ENCODE measurements at regions of chr21 and their contacts with region 1.

Region 1: GRCh38 chr21:35400233-35400957 is 351.3 kb upstream of the RUNX1 start:
- DNase-seq: no peak
- ATAC-seq: peak; percentile 73

Region 2: DNA sequence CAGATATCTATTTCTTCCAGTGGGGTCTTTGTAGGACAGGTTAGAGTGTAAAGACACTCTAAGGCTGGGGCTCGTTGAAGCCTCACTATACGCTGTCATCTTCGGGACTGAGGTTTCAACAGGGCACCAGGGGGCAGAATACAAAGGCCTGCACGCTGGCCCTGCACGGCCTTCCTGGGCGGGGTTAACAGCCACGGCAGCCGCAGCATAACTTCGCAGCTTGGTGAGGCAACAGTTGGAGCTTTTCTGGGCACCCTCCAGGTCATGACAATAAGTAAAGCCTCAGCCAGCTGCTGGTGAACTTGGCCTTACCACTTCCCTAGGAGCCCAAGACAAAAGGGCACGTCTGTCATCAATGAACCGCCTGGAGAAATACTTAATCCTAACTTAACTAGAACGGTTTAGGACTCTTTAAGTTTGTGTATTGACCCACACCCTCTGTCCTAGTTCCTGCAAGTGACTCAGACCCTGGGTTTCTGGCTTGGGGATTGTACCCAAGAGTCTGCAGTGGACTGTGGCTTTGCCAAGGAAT is 349.0 kb before region 1 on chr21:
- intact Hi-C with region 1: loop called (anchors 5 to 10 kb)
- DNase-seq: peak; percentile 91
- ATAC-seq: peak; percentile 88

Region 3: DNA sequence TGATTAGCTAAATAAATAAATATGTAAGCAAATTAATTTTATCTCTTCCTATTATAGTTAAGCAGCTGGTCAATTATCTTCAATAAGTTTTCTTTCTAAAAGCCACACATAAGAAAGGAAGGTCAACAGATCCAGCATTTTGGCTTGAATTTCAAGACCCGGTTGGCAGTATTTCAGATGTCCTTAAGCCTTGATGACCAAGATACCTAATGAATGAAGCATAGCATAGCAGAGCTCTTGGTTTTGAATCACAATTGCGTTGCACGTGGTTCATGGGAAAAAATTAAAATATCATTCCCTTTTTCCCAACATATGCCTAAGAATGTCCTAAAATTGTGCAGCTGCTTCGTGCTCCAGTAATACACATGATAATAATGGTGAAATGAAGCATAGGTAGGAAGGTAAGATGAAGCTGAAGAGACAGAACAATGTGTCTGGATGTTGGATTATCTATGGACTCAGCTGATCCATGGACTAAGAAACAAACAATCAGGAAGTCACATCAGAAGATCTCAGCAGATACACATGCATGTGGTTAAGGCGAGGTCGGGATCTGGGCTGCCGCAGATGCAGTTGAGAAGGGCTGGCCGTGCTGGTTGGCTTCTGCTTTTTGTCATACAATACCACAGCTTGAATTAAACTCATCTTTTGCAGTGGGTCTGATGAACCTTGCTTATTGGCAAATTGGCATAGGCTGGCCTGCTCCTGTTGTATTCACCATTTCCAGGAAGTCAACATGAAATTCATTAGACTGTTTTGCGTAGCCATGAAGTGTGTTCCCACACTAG is 66.4 kb before region 1 on chr21:
- intact Hi-C with region 1: no loop called
- DNase-seq: no peak
- ATAC-seq: no peak

Measured in left cardiac atrium (tissue), 4 donors.